Common myeloid progenitor, CD34-positive (primary cell): ENCODE measurements at regions of chr5 and their contacts with region 1.

Region 1: GRCh38 chr5:169637085-169637548 is at the start of gene DOCK2:
- DNase-seq: peak; percentile 89 to 97 (median 96)
- H3K4me3 ChIP-seq: peak within 1 kb of the TSS; percentile 52 to 86 (median 77)
- H3K27ac ChIP-seq: peak within 1 kb of the TSS; percentile 67 to 82
- H3K4me1 ChIP-seq: peaks cover 12 to 26% (median 18%) of the 10 kb centered on the region in 4 experiments
- H3K27me3 ChIP-seq: no peaks in the 10 kb centered on the region

Region 2: GRCh38 chr5:169626779-169627178 is 10.3 kb before region 1 on chr5:
- CTCF ChIA-PET with region 1: no interaction called
- POLR2A ChIA-PET with region 1: no interaction called
- DNase-seq: no peak
- H3K4me3 ChIP-seq: no peak overlapping the region
- H3K27ac ChIP-seq: no peak overlapping the region
- H3K4me1 ChIP-seq: no peaks in the 10 kb centered on the region
- H3K27me3 ChIP-seq: no peaks in the 10 kb centered on the region

Region 3: DNA sequence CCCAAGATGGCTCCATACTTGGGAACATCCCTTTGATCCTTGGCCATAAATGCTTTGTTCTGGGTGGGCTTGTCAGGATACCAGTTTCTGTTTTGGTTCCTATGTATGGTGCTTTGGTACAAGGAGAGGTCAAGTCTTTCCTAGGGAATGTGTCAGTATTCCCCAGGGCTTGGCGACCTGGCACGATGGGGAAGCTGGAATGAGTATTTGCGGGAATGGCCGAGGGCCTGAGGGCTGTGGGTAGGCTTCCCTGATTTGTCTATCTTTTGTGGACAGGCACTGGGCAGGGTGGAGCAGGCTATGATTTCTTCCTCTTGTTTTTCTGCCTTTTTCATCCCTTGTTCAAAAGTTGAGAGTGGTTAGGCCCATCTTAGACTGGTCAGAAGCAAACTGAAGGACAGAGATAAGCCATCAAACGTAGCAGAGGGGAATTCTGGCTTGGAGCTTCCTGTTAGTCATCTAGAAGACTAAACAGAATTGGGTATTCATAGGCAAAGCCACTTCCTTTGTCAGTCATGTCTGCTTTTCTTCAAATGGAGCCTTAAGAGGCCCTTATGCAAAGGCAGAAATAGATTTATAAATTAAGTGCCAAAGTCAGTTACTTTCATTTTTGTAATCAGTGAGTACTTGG is 13.7 kb after region 1 on chr5:
- CTCF ChIA-PET with region 1: interaction called, 16 read pairs
- POLR2A ChIA-PET with region 1: interaction called, 8 read pairs
- DNase-seq: peak; percentile 51 to 80 (median 74)
- H3K4me3 ChIP-seq: peak overlapping the region in 6 of 7 experiments; percentile 1 to 60 (median 34)
- H3K27ac ChIP-seq: peak overlapping the region; percentile 67 to 84
- H3K4me1 ChIP-seq: peaks cover 18 to 77% (median 68%) of the 10 kb centered on the region in 4 experiments
- H3K27me3 ChIP-seq: no peaks in the 10 kb centered on the region

Region 4: GRCh38 chr5:169753795-169754194 is 116.7 kb after region 1 on chr5:
- CTCF ChIA-PET with region 1: no interaction called
- POLR2A ChIA-PET with region 1: no interaction called
- DNase-seq: no peak
- H3K4me3 ChIP-seq: no peak overlapping the region
- H3K27ac ChIP-seq: no peak overlapping the region
- H3K4me1 ChIP-seq: peaks cover 0 to 4% (median 3%) of the 10 kb centered on the region in 4 experiments
- H3K27me3 ChIP-seq: no peaks in the 10 kb centered on the region